Activated naive CD4-positive, alpha-beta T cell treated with anti-CD3 and anti-CD28 coated beads, Interleukin-2, amount 10 ng/mL, durations not matched to agents 7 days and 5 days (primary cell): ENCODE measurements at regions of chr18 and their contacts with region 1.

Region 1: GRCh38 chr18:36095936-36096519 is 28.7 kb upstream of the RPRD1A start:
- DNase-seq: no peak
- H3K4me3 Mint-ChIP-seq: no peak overlapping the region
- H3K27ac Mint-ChIP-seq: no peak overlapping the region
- H3K4me1 Mint-ChIP-seq: peaks cover 7% of the 10 kb centered on the region
- H3K27me3 Mint-ChIP-seq: peaks cover 4% of the 10 kb centered on the region

Region 2: DNA sequence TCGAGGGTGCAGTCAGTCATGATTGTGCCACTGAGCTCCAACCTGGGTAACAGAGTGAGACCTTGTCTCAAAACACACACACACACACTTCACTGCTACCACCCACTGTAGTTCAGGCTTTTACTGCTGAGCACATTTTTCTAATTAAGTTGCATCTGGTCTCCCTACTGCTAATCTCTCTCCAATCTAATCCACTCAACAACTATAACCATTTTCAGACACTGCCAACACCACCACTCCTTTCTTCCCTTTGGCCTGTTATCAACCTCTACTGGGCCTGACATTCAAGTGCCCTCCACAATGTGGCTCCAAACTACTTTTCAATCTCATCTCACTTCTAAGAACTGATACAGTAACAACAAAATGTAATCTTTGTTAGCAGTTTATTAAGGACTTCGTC is 78.8 kb before region 1 on chr18:
- CTCF ChIA-PET with region 1: interaction called, 14 read pairs
- DNase-seq: no peak
- H3K4me3 Mint-ChIP-seq: no peak overlapping the region
- H3K27ac Mint-ChIP-seq: no peak overlapping the region
- H3K4me1 Mint-ChIP-seq: no peaks in the 10 kb centered on the region
- H3K27me3 Mint-ChIP-seq: no peaks in the 10 kb centered on the region